A673 (cell line): ENCODE measurements at regions of chr3 and their contacts with region 1.

Region 1: GRCh38 chr3:155805802-155806618 is at the start of gene C3orf33:
- DNase-seq: peak; percentile 81
- H3K4me3 ChIP-seq: peak within 1 kb of the TSS; percentile 88
- H3K27ac ChIP-seq: peak within 1 kb of the TSS; percentile 95
- H3K4me1 ChIP-seq: peaks cover 5% of the 10 kb centered on the region
- H3K27me3 ChIP-seq: no peaks in the 10 kb centered on the region
- CTCF ChIP-seq: peak; percentile 87
- total RNA-seq, gene C3orf33: 2.9 and 3.5 TPM in 2 replicates

Region 2: DNA sequence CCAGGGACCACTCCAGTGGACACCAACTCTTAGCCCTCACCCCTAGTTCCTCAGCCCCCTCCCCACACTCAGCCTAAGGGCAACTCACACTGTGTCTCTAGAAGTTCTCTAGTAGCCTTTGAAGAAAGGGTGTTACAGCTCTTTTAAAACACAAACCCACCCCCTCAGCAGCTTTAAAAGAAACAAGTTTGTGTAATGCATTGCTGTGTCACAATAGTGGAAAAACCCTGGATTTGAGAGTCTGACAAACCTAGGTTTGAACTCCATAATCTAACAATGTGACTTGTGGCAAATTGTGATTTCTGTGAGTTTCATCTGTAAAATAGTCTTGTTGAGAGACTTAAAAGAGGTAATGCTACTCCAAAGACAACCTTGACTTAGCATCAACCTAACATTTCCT is 115.1 kb before region 1 on chr3:
- CTCF ChIA-PET with region 1: no interaction called
- POLR2A ChIA-PET with region 1: no interaction called
- intact Hi-C with region 1: no loop called
- DNase-seq: no peak
- H3K4me3 ChIP-seq: no peak overlapping the region
- H3K27ac ChIP-seq: no peak overlapping the region
- H3K4me1 ChIP-seq: no peaks in the 10 kb centered on the region
- H3K27me3 ChIP-seq: no peaks in the 10 kb centered on the region
- CTCF ChIP-seq: no peak

Region 3: GRCh38 chr3:155744626-155745324 is 61.2 kb before region 1 on chr3 and contains the start of gene PLCH1:
- CTCF ChIA-PET with region 1: no interaction called
- POLR2A ChIA-PET with region 1: no interaction called
- intact Hi-C with region 1: loop called (anchors 2 kb)
- DNase-seq: peak; percentile 90
- H3K4me3 ChIP-seq: peak within 1 kb of the TSS; percentile 72
- H3K27ac ChIP-seq: peak within 1 kb of the TSS; percentile 39
- H3K4me1 ChIP-seq: peaks cover 16% of the 10 kb centered on the region
- H3K27me3 ChIP-seq: no peaks in the 10 kb centered on the region
- CTCF ChIP-seq: no peak
- total RNA-seq, gene PLCH1: 3.1 TPM in 2 replicates

Region 4: GRCh38 chr3:155870133-155870944 is 64.3 kb after region 1 on chr3 and contains the start of gene GMPS:
- CTCF ChIA-PET with region 1: interaction called, 11 read pairs
- POLR2A ChIA-PET with region 1: no interaction called
- intact Hi-C with region 1: no loop called
- DNase-seq: peak; percentile 97
- H3K4me3 ChIP-seq: peak within 1 kb of the TSS; percentile 100
- H3K27ac ChIP-seq: peak within 1 kb of the TSS; percentile 99
- H3K4me1 ChIP-seq: peaks cover 10% of the 10 kb centered on the region
- H3K27me3 ChIP-seq: no peaks in the 10 kb centered on the region
- CTCF ChIP-seq: peak; percentile 45
- total RNA-seq, gene GMPS: 185 and 187 TPM in 2 replicates

Region 5: DNA sequence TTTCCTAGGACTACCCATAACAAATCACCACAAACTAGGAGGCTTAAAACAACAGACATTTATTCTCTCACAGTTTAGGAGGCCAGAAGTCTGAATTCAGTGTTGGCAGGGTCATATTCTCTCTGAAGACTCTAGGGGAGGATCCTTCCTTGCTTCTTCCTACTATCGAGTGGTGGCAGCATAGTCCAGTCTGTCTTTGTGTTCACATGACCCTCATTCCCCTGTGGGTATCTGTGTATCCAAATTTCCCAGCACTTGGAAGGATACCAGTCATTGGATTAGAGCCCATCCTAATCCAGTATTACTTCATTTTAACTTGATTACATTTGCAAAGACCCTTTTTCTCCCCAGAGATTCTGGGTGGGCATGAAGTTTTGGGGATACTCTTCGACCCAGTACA is 128.2 kb after region 1 on chr3:
- CTCF ChIA-PET with region 1: no interaction called
- POLR2A ChIA-PET with region 1: no interaction called
- intact Hi-C with region 1: no loop called
- DNase-seq: no peak
- H3K4me3 ChIP-seq: no peak overlapping the region
- H3K27ac ChIP-seq: no peak overlapping the region
- H3K4me1 ChIP-seq: no peaks in the 10 kb centered on the region
- H3K27me3 ChIP-seq: no peaks in the 10 kb centered on the region
- CTCF ChIP-seq: no peak

Region 6: DNA sequence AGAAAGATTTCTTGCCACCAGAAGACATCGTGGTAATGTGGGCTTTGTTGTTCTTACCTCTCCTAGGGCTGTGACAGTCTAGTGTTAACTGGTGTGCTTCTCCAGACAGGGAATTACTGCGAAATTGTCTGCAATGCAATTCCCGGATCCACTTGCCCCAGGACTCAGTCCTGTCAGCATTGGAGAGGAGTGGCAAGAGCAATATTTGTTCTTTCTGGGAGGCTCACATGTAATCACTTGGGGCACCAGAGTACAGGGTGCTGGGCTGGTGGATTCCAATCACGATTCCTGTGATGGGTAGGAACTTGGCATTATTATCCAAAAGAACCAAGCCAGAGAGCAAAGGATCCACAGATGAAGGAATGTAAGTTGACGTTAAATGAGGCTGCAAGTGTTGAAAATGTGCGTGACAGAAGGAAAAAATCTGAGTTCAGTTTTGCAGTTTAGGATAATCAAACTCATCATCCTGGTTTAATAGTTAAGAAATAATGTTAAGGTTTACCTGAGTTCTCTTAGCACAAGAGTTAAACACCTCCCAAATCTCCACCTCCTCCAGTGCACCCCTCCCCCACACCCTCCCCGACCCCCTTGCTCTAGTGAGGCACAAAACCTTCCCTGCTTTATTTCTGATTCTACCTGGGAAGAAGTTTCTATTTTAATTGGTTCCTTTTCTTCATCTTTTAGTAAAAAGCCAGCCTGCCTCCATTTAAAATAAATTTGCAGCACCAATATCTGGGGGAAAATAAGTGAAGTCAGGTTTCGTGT is 143.6 kb after region 1 on chr3:
- CTCF ChIA-PET with region 1: no interaction called
- POLR2A ChIA-PET with region 1: interaction called, 16 read pairs
- intact Hi-C with region 1: no loop called
- DNase-seq: no peak
- H3K4me3 ChIP-seq: no peak overlapping the region
- H3K27ac ChIP-seq: no peak overlapping the region
- H3K4me1 ChIP-seq: no peaks in the 10 kb centered on the region
- H3K27me3 ChIP-seq: no peaks in the 10 kb centered on the region
- CTCF ChIP-seq: no peak

Region 7: DNA sequence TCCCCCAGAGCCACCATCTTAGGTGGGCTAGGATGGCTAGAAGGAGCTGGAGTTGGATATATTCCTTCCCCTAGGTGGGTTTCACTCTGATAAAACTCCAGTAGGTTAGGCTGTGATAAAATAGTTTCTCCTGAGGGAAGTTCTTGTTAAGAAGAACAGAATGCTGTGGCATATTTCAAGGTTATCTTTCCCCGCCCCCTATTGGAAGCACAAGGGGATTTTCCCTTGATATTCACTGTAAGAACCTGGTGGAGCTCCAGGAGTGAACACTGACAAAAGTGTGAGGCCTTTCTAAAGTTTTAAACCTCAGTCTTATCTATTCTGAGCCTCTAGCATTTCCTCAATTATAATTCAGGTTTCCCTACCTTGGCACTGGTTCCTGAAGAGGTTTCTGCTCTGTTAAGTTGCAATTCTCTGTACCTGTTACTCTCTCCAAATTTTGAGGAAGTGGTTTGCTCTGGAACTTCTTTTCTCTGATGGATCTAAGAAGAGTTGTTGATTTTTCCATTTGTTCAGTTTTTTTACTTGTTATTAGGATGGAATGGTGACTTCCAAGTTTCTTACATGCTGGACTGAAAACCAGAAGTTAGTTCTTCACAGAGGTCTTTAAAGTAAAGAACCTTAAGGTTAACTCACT is 177.9 kb after region 1 on chr3:
- CTCF ChIA-PET with region 1: no interaction called
- POLR2A ChIA-PET with region 1: interaction called, 15 read pairs
- intact Hi-C with region 1: no loop called
- DNase-seq: no peak
- H3K4me3 ChIP-seq: no peak overlapping the region
- H3K27ac ChIP-seq: no peak overlapping the region
- H3K4me1 ChIP-seq: no peaks in the 10 kb centered on the region
- H3K27me3 ChIP-seq: no peaks in the 10 kb centered on the region
- CTCF ChIP-seq: no peak